ENCODE measurements at regions of chr19 and their contacts with region 1.

Region 1: GRCh38 chr19:43555185-43555770 is 20.0 kb downstream of the XRCC1 start:
- DNase-seq: peak; percentile 87
- H3K4me3 Mint-ChIP-seq: no peak overlapping the region
- H3K27ac Mint-ChIP-seq: no peak overlapping the region
- H3K4me1 Mint-ChIP-seq: no peaks in the 10 kb centered on the region
- H3K27me3 Mint-ChIP-seq: no peaks in the 10 kb centered on the region
- CTCF ChIP-seq: peak; percentile 84

Region 2: GRCh38 chr19:43532962-43533545 is 22.2 kb before region 1 on chr19 and contains the start of gene ZNF575:
- CTCF ChIA-PET with region 1: interaction called, 13 read pairs
- intact Hi-C with region 1: no loop called
- DNase-seq: peak; percentile 96
- H3K4me3 Mint-ChIP-seq: peak within 1 kb of the TSS; percentile 79
- H3K27ac Mint-ChIP-seq: peak within 1 kb of the TSS; percentile 68
- H3K4me1 Mint-ChIP-seq: no peaks in the 10 kb centered on the region
- H3K27me3 Mint-ChIP-seq: no peaks in the 10 kb centered on the region
- CTCF ChIP-seq: no peak
- total RNA-seq, gene ZNF575: 2.2 and 2.8 TPM in 2 replicates

Region 3: GRCh38 chr19:43651758-43652545 is 96.7 kb after region 1 on chr19:
- CTCF ChIA-PET with region 1: no interaction called
- intact Hi-C with region 1: loop called (anchors 5 kb)
- DNase-seq: peak; percentile 79
- H3K4me3 Mint-ChIP-seq: no peak overlapping the region
- H3K27ac Mint-ChIP-seq: no peak overlapping the region
- H3K4me1 Mint-ChIP-seq: no peaks in the 10 kb centered on the region
- H3K27me3 Mint-ChIP-seq: no peaks in the 10 kb centered on the region
- CTCF ChIP-seq: peak; percentile 81

Measured in Calu3 (cell line).